ENCODE measurements at regions of chr9 and their contacts with region 1.

Region 1: GRCh38 chr9:36407122-36407723 is 7.2 kb upstream of the RNF38 start:
- DNase-seq: peak; percentile 27 to 86 (median 63)
- ATAC-seq: peak; percentile 96
- H3K4me3 ChIP-seq: no peak overlapping the region
- H3K4me3 Mint-ChIP-seq: no peak overlapping the region
- H3K27ac ChIP-seq: peak overlapping the region in 1 of 2 experiments; percentile 26
- H3K27ac Mint-ChIP-seq: peak overlapping the region; percentile 68
- H3K4me1 ChIP-seq: peaks cover 4% of the 10 kb centered on the region
- H3K4me1 Mint-ChIP-seq: peaks cover 17% of the 10 kb centered on the region
- H3K27me3 ChIP-seq: no peaks in the 10 kb centered on the region
- H3K27me3 Mint-ChIP-seq: no peaks in the 10 kb centered on the region
- CTCF ChIP-seq: peak; percentile 98

Region 2: GRCh38 chr9:36341936-36342577 is 65.2 kb before region 1 on chr9:
- CTCF ChIA-PET with region 1: no interaction called
- POLR2A ChIA-PET with region 1: no interaction called
- intact Hi-C with region 1: no loop called
- DNase-seq: no peak
- ATAC-seq: peak; percentile 31
- H3K4me3 ChIP-seq: no peak overlapping the region
- H3K4me3 Mint-ChIP-seq: no peak overlapping the region
- H3K27ac ChIP-seq: no peak overlapping the region
- H3K27ac Mint-ChIP-seq: no peak overlapping the region
- H3K4me1 ChIP-seq: no peaks in the 10 kb centered on the region
- H3K4me1 Mint-ChIP-seq: no peaks in the 10 kb centered on the region
- H3K27me3 ChIP-seq: no peaks in the 10 kb centered on the region
- H3K27me3 Mint-ChIP-seq: no peaks in the 10 kb centered on the region
- CTCF ChIP-seq: no peak

Region 3: GRCh38 chr9:36436909-36437308 is 29.7 kb after region 1 on chr9:
- CTCF ChIA-PET with region 1: interaction called, 22 read pairs
- POLR2A ChIA-PET with region 1: interaction called, 7 read pairs
- intact Hi-C with region 1: no loop called
- DNase-seq: no peak
- ATAC-seq: no peak
- H3K4me3 ChIP-seq: no peak overlapping the region
- H3K4me3 Mint-ChIP-seq: no peak overlapping the region
- H3K27ac ChIP-seq: no peak overlapping the region
- H3K27ac Mint-ChIP-seq: no peak overlapping the region
- H3K4me1 ChIP-seq: peaks cover 16% of the 10 kb centered on the region
- H3K4me1 Mint-ChIP-seq: peaks cover 41% of the 10 kb centered on the region
- H3K27me3 ChIP-seq: no peaks in the 10 kb centered on the region
- H3K27me3 Mint-ChIP-seq: no peaks in the 10 kb centered on the region
- CTCF ChIP-seq: no peak

Region 4: DNA sequence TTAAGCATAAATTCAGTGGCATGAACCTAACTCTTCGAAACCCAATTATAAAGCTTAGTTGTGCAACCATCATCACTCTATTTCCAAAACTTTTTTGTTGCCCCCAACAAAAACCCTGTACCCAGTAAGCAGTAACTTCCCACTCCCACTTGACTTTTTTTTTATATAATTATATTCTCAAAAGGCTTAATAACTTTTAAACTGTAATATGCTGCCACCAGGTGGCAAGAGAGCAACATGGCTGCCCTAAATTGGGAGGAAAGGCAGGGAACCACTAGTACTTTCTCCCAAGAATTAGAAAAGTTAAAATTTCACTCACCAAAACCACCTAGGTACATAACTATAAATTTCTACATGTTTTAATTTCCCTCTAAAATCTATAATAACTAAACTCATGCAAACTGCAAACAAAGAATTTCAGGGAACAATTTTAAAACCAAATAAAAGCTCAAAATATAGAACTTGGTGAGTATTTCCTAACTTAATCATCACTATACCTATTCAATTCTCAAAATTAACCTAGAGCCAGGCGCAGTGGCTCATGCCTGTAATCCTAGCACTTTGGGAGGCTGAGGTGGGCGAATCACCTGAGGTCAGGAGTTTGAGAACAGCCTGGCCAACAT is 43.0 kb after region 1 on chr9:
- CTCF ChIA-PET with region 1: interaction called, 87 read pairs
- POLR2A ChIA-PET with region 1: interaction called, 4 read pairs
- intact Hi-C with region 1: loop called (anchors 1 kb)
- DNase-seq: peak in 3 of 9 experiments; percentile 41 to 66 (median 56)
- ATAC-seq: no peak
- H3K4me3 ChIP-seq: no peak overlapping the region
- H3K4me3 Mint-ChIP-seq: no peak overlapping the region
- H3K27ac ChIP-seq: no peak overlapping the region
- H3K27ac Mint-ChIP-seq: no peak overlapping the region
- H3K4me1 ChIP-seq: peaks cover 14% of the 10 kb centered on the region
- H3K4me1 Mint-ChIP-seq: peaks cover 38% of the 10 kb centered on the region
- H3K27me3 ChIP-seq: no peaks in the 10 kb centered on the region
- H3K27me3 Mint-ChIP-seq: no peaks in the 10 kb centered on the region
- CTCF ChIP-seq: peak; percentile 75

Region 5: GRCh38 chr9:36487482-36488388 is 80.5 kb after region 1 on chr9:
- CTCF ChIA-PET with region 1: interaction called, 17 read pairs
- POLR2A ChIA-PET with region 1: interaction called, 14 read pairs
- intact Hi-C with region 1: loop called in 1 of 2 experiments (anchors 2 kb)
- DNase-seq: peak; percentile 82 to 97 (median 89)
- ATAC-seq: peak; percentile 85
- H3K4me3 ChIP-seq: peak overlapping the region; percentile 78 to 79
- H3K4me3 Mint-ChIP-seq: peak overlapping the region; percentile 95
- H3K27ac ChIP-seq: peak overlapping the region; percentile 86 to 95
- H3K27ac Mint-ChIP-seq: peak overlapping the region; percentile 97
- H3K4me1 ChIP-seq: peaks cover 38% of the 10 kb centered on the region
- H3K4me1 Mint-ChIP-seq: peaks cover 63% of the 10 kb centered on the region
- H3K27me3 ChIP-seq: no peaks in the 10 kb centered on the region
- H3K27me3 Mint-ChIP-seq: no peaks in the 10 kb centered on the region
- CTCF ChIP-seq: no peak

Region 6: DNA sequence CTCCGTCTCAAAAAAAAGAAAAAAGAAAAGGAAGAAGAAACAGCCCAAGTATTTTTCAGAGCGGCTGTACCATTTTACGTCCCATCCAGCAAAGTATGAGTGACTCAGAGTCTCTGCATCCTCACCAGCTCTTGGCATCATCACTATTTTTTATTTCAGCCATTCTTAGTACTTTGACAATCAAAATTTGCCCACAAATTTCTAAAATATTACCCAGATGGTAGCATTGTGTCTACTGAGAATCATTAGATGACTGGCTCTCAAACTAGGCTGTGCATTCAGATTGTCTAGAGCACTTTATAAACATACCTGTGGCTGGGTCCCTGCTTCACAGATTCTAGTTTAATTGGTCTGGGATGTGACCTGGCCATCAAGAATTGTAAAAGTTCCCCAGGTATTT is 143.9 kb after region 1 on chr9:
- CTCF ChIA-PET with region 1: interaction called, 325 read pairs
- POLR2A ChIA-PET with region 1: interaction called, 9 read pairs
- intact Hi-C with region 1: loop called (anchors 1 kb)
- DNase-seq: no peak
- ATAC-seq: no peak
- H3K4me3 ChIP-seq: no peak overlapping the region
- H3K4me3 Mint-ChIP-seq: no peak overlapping the region
- H3K27ac ChIP-seq: no peak overlapping the region
- H3K27ac Mint-ChIP-seq: no peak overlapping the region
- H3K4me1 ChIP-seq: no peaks in the 10 kb centered on the region
- H3K4me1 Mint-ChIP-seq: peaks cover 3% of the 10 kb centered on the region
- H3K27me3 ChIP-seq: no peaks in the 10 kb centered on the region
- H3K27me3 Mint-ChIP-seq: no peaks in the 10 kb centered on the region
- CTCF ChIP-seq: no peak

Region 7: DNA sequence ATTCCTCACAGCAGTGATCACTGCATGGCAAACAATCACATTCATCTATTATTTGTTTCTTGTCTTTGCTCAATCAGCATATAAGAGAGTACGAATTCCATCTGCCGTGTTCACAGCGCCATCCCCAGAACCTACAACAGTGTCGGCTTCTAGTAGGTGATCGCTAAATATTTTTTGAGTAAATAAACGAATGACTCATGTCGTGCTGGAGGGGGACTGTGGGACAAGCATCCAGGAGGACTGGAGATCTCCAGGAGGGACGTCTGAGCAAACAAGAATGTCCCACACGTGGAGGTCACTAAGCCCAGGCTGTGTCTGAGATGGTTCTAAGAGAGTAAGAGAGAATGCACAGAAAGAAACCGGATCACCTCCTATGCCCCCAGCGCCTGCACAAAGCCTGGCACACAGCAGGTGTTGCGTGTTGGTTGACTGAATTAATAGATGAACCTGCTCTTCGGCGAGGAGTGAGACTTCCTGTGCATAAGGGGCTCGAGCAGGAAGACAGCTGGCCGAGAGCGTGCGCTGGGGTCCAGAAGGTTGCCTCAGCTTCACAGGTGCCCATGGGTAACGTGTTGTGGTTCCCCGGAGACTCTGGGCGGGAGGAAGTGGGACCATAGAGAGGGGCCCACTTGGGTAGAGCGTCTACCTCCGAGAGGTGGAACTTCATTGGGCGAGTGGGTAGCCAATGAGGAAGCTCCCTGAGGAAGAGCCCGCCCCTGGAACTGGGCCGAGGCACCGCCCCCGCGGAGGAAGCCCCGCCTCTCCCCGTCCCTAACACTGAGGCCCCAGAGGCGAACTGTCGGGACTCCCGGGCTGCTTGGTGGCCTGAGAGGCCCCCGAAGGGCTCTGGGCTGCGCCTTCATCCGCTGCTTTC is 358.5 kb after region 1 on chr9:
- CTCF ChIA-PET with region 1: no interaction called
- POLR2A ChIA-PET with region 1: no interaction called
- intact Hi-C with region 1: loop called (anchors 5 to 10 kb)
- DNase-seq: peak; percentile 68 to 95 (median 89)
- ATAC-seq: peak; percentile 99
- H3K4me3 ChIP-seq: peak overlapping the region; percentile 47 to 54
- H3K4me3 Mint-ChIP-seq: no peak overlapping the region
- H3K27ac ChIP-seq: peak overlapping the region; percentile 23 to 39
- H3K27ac Mint-ChIP-seq: peak overlapping the region; percentile 71
- H3K4me1 ChIP-seq: peaks cover 6% of the 10 kb centered on the region
- H3K4me1 Mint-ChIP-seq: peaks cover 6% of the 10 kb centered on the region
- H3K27me3 ChIP-seq: peaks cover 0 to 7% of the 10 kb centered on the region in 2 experiments
- H3K27me3 Mint-ChIP-seq: peaks cover 5% of the 10 kb centered on the region
- CTCF ChIP-seq: no peak

Region 8: DNA sequence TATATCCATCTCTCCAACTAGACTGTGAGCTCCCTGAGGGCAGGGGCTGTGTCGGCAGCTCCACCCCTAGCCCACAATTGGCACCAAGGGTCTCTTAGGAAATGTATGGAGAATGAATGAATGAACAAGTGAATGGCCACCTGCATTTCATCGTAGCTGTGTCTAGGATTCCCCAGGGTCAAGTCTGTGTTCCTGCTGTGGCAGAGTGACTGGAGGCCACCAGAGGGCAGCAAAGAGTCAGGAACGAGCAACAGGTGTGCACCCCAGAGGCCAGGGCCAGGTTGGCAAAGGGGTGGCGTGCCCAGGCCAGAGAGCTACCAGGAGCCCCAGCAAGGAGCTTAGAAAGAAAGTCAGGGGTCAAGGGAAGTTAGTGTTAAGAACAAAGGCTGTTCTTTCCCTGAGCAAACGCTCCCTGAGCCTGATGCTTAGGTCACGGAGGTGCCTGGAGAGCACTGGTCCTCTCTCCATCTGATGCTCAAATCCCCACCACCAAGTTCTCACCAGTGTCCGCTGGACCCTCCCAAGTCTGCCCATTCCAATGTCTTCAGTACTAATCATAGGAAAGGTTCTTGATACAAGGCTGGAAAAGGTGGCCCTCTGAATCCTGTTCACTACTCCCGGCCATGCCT is 466.1 kb after region 1 on chr9:
- CTCF ChIA-PET with region 1: interaction called, 3 read pairs
- POLR2A ChIA-PET with region 1: no interaction called
- intact Hi-C with region 1: loop called in 1 of 2 experiments (anchors 5 kb)
- DNase-seq: peak; percentile 46 to 83 (median 73)
- ATAC-seq: peak; percentile 57
- H3K4me3 ChIP-seq: no peak overlapping the region
- H3K4me3 Mint-ChIP-seq: no peak overlapping the region
- H3K27ac ChIP-seq: no peak overlapping the region
- H3K27ac Mint-ChIP-seq: no peak overlapping the region
- H3K4me1 ChIP-seq: no peaks in the 10 kb centered on the region
- H3K4me1 Mint-ChIP-seq: no peaks in the 10 kb centered on the region
- H3K27me3 ChIP-seq: no peaks in the 10 kb centered on the region
- H3K27me3 Mint-ChIP-seq: peaks cover 10% of the 10 kb centered on the region
- CTCF ChIP-seq: peak; percentile 84

Measured in CD8-positive, alpha-beta T cell (primary cell).